ENCODE measurements at regions of chr12 and their contacts with region 1.

Region 1: DNA sequence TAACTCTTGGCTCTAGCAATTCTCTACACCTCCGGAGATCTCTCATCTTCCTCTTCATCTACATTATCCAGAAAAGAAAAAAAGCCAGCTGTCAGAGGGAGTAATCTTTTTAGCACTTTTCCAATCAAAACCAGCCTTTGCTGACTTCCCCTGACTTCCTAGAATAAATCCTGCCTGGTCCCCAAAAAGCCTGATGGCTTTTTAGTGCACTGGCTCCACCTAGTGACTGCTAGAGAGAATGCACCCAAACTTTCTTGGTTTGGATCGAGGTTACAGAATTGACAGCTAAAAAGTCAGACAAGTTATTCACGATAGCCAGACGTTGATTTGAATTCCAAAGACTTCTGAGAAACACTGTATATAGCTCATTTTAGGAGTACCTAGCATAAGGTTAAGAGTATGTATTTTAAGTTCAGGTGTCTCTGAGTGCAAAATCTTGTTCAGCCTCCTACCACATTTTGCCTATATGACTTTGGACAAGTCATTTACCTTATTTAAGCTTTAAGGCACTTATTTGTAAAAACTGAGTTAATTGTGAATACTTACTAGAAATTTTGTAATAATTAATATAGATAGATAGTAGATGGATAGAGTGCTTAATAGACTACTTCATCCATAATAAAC is 185.7 kb upstream of the GRIN2B start:
- DNase-seq: peak; percentile 61
- ATAC-seq: peak; percentile 44
- H3K4me3 Mint-ChIP-seq: no peak overlapping the region
- H3K27ac Mint-ChIP-seq: no peak overlapping the region
- H3K4me1 Mint-ChIP-seq: no peaks in the 10 kb centered on the region; the same call in 1 of the 2 replicates
- H3K27me3 Mint-ChIP-seq: peaks cover 6% of the 10 kb centered on the region
- CTCF ChIP-seq: peak; percentile 76

Region 2: GRCh38 chr12:14111230-14111865 is 55.8 kb before region 1 on chr12:
- CTCF ChIA-PET with region 1: interaction called, 14 read pairs
- POLR2A ChIA-PET with region 1: no interaction called
- DNase-seq: peak; percentile 42
- ATAC-seq: peak; percentile 98
- H3K4me3 Mint-ChIP-seq: no peak overlapping the region
- H3K27ac Mint-ChIP-seq: no peak overlapping the region
- H3K4me1 Mint-ChIP-seq: 0 out of 2 replicates have a peak, but pooled peaks cover 6% of the 10 kb centered on the region
- H3K27me3 Mint-ChIP-seq: peaks cover 6% of the 10 kb centered on the region; the same call in 1 of the 2 replicates
- CTCF ChIP-seq: peak; percentile 41

Region 3: GRCh38 chr12:14185427-14186192 is 18.5 kb after region 1 on chr12:
- CTCF ChIA-PET with region 1: interaction called, 10 read pairs
- POLR2A ChIA-PET with region 1: no interaction called
- DNase-seq: peak; percentile 47
- ATAC-seq: peak; percentile 87
- H3K4me3 Mint-ChIP-seq: no peak overlapping the region
- H3K27ac Mint-ChIP-seq: no peak overlapping the region
- H3K4me1 Mint-ChIP-seq: peaks cover 11% of the 10 kb centered on the region
- H3K27me3 Mint-ChIP-seq: no peaks in the 10 kb centered on the region; the same call in 1 of the 2 replicates
- CTCF ChIP-seq: peak; percentile 61

Region 4: GRCh38 chr12:14207905-14208551 is 40.9 kb after region 1 on chr12:
- CTCF ChIA-PET with region 1: no interaction called
- POLR2A ChIA-PET with region 1: no interaction called
- DNase-seq: no peak
- ATAC-seq: peak; percentile 55
- H3K4me3 Mint-ChIP-seq: no peak overlapping the region
- H3K27ac Mint-ChIP-seq: no peak overlapping the region
- H3K4me1 Mint-ChIP-seq: peaks cover 45% of the 10 kb centered on the region
- H3K27me3 Mint-ChIP-seq: peaks cover 6% of the 10 kb centered on the region; the same call in 1 of the 2 replicates
- CTCF ChIP-seq: no peak

Measured in WTC11 (cell line).